ENCODE measurements at regions of chr2 and their contacts with region 1.

Region 1: GRCh38 chr2:111698743-111699554 is 185.0 kb downstream of the ANAPC1 start:
- DNase-seq: peak; percentile 94
- H3K4me3 ChIP-seq: peak overlapping the region; percentile 20; the same call in 1 of the 2 replicates
- CTCF ChIP-seq: peak; percentile 47

Region 2: GRCh38 chr2:110812726-110813645 is 886.0 kb before region 1 on chr2:
- CTCF ChIA-PET with region 1: interaction called, 46 read pairs
- POLR2A ChIA-PET with region 1: no interaction called
- DNase-seq: no peak
- H3K4me3 ChIP-seq: no peak overlapping the region
- CTCF ChIP-seq: no peak

Region 3: DNA sequence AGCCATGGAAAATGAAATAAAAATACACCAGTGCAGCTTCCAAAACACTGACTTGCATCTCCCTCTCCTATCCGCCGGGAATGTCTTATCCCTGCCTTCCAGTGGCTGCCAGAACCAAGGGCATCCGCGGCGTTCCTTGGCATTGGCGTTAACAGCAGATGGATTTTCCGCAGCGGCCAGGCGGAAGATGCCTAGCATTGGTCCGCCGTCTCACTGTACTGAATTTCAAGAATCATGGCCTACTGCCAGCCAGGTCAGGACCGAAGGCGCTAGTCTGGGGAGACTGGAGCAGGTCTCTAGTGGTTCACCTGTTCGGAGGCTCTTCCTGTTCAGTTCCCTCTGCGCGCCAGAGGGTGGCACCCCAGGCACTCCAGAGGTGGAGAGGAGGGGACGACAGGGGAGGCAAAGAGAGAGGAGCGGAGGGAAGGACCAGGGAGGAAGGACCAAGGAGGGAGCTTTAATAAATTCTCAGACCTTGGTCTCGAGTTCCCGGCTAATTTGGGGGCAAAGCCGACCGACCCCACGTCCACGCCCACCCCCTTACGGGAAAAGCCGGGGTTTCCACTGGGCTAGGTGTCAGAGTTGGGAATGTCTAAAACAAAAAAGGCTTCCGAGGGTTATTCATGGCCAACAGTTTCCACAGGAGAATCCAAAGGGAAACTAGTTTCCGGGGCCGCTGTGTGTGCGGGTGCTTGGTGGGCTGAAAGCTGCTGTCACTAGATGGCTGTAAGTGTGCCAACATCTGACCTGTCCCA is 581.9 kb before region 1 on chr2:
- CTCF ChIA-PET with region 1: interaction called, 36 read pairs
- POLR2A ChIA-PET with region 1: interaction called, 5 read pairs
- DNase-seq: no peak
- H3K4me3 ChIP-seq: peak overlapping the region; percentile 57
- CTCF ChIP-seq: peak; percentile 98

Measured in AG04449 (cell line).